RWPE1 (cell line): ENCODE measurements at regions of chr5 and their contacts with region 1.

Region 1: DNA sequence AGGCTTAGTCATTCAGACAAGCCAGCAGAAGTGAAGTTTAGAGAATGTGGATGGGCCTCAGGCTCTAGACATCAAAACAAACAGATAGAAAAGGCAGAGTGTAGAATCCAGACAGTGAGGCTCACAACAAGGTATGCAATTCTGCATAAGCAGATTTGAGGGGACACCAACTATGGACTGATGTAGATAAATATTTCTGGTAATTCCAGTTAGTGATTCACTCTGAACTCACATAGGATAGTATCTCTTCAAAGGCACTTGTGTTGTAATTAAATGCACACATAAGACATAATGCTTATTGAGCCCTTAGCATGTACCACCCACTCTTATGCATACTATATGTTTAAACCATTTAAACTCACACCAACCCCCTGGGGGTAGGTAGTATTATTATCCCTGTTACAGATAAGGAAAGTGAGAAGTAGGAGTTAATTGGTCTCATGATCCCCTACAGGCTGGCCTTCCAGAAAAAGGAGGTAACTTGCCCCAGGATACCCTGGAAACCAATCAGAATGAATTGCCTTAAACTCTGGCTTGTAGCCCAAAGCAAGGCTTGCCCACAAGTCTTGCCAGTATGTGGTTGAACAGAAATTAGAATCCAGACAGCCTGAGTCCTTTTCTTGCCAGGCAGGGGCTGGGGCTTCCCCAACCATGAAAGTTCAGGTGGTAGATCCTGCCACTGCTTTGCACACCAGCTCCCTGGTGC is 39.5 kb upstream of the HSPB3 start:
- DNase-seq: peak; percentile 72
- H3K27ac ChIP-seq: no peak overlapping the region
- CTCF ChIP-seq: no peak

Region 2: DNA sequence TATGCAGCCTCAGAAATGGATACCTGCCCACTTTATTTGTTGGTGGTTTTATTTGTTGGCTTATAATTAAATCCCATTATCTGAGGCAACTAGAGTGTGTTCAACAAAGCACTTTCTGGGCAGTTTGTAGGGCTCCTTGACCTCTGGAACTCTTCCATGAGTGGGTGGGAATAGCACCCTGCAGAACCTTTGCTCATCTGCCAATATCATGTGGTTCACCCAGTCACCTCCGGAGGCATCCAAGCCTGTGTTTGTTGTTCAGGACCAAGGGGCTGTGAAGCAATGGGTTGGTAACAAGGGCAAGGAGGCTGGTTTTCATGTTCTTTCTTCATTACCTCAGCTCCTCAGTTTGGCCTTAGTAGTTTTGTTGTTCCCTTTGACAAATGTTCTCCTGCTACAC is 541.6 kb before region 1 on chr5:
- CTCF ChIA-PET with region 1: no interaction called
- POLR2A ChIA-PET with region 1: no interaction called
- DNase-seq: peak; percentile 53
- H3K27ac ChIP-seq: no peak overlapping the region
- CTCF ChIP-seq: no peak

Region 3: GRCh38 chr5:54310433-54311175 is 105.4 kb before region 1 on chr5 and contains the start of gene ARL15:
- CTCF ChIA-PET with region 1: interaction called, 11 read pairs
- POLR2A ChIA-PET with region 1: interaction called, 3 read pairs
- DNase-seq: peak; percentile 100
- H3K27ac ChIP-seq: peak within 1 kb of the TSS; percentile 88
- CTCF ChIP-seq: no peak

Region 4: DNA sequence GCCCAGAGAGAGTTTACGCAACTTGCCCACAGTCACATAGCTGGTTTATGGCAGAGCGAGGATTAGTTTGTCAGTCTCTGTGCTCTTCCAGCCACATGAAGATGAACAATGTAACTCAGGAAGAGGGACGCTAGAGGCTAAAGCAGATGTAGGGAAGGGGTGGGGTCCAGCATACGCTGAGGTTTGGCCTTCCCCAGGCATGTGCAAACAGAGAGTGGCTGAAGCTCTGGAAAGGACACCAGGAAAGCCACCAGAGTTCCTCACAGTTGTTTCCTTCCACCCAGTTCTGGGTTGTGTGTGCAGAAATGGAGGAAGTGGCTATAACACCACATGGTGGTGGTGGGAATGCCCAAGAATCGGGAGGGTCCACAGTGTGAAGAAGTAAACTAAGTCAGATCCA is 161.5 kb after region 1 on chr5:
- CTCF ChIA-PET with region 1: no interaction called
- POLR2A ChIA-PET with region 1: no interaction called
- DNase-seq: no peak
- H3K27ac ChIP-seq: no peak overlapping the region
- CTCF ChIP-seq: no peak